Uterus (tissue), 4 donors: ENCODE measurements at regions of chr20 and their contacts with region 1.

Region 1: DNA sequence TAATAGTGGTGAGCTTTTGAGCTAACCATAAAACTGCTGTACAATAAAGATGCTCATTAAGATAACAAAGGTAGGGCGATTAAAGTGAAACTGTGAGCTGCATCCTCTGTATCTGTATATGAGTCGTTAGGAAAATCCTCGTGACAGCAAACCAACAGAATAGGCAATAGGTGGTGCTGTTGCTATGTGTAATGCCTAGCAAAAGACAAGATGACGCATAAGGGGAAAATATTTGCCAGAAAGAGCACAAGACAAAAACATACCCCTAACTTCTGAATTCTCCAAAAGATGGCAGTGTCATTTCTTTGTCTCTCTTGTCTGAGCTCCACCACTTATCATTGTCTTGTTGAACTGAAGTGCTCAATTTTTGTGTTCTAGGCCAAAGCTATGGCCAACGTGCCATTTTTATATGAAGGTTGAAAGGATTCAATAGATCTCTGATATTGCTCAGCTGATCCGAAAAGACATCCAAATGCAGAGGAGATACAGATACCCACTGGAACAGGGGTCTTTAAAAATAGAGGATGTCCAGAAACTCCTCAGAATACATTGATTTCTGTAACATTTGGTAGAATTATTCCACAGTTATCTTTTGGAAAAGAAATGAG is 56.3 kb upstream of the ANKEF1 start:
- DNase-seq: peak; percentile 22 to 63
- H3K4me3 ChIP-seq: no peak overlapping the region
- H3K27ac ChIP-seq: peak overlapping the region in 1 of 2 donors; percentile 29
- H3K4me1 ChIP-seq: peaks cover 0 to 5% of the 10 kb centered on the region in 2 donors
- H3K27me3 ChIP-seq: no peaks in the 10 kb centered on the region
- CTCF ChIP-seq: peak; percentile 75 to 93 (median 83)
- POLR2A ChIP-seq: no peak

Region 2: DNA sequence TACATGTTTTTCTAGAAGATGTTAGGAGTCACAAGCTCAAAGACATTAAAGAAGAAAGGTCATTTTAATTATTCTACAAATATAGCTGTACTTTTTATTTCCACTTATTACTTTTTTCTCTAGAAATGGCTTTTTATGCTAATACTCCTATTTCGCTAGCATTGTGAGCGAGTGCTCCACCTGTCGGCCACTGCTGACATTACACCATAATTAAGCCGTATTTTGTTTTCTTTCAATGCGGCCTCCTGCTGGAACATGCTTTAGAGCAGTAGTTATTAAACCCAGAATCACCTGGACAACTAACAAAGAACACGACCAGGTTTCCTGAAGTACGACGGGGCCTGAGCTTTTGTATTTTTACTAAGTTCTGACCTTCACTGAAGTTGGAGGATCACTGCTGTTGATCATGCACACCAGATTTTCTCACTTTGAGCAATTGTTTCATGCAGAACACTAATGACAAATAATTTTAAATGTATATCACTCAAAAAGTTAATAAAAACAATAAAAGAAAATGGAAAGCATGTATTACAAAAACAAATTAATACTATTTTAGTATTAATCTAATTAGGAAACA is 65.6 kb before region 1 on chr20:
- intact Hi-C with region 1: no loop called
- DNase-seq: peak; percentile 15 to 22
- H3K4me3 ChIP-seq: no peak overlapping the region
- H3K27ac ChIP-seq: no peak overlapping the region
- H3K4me1 ChIP-seq: no peaks in the 10 kb centered on the region
- H3K27me3 ChIP-seq: no peaks in the 10 kb centered on the region
- CTCF ChIP-seq: peak; percentile 57 to 73 (median 64)
- POLR2A ChIP-seq: no peak

Region 3: GRCh38 chr20:10427060-10427692 is 448.7 kb after region 1 on chr20:
- intact Hi-C with region 1: loop called (anchors 10 kb)
- DNase-seq: peak; percentile 30 to 55
- H3K4me3 ChIP-seq: no peak overlapping the region
- H3K27ac ChIP-seq: peak overlapping the region in 1 of 2 donors; percentile 12
- H3K4me1 ChIP-seq: no peaks in the 10 kb centered on the region
- H3K27me3 ChIP-seq: no peaks in the 10 kb centered on the region
- CTCF ChIP-seq: peak; percentile 71 to 78 (median 72)
- POLR2A ChIP-seq: no peak